Left colon (tissue), 2 donors: ENCODE measurements at regions of chr17 and their contacts with region 1.

Region 1: GRCh38 chr17:59859444-59860025 is 33.2 kb downstream of the TUBD1 start:
- DNase-seq: no peak
- ATAC-seq: peak; percentile 80

Region 2: GRCh38 chr17:59746849-59747445 is 112.6 kb before region 1 on chr17:
- intact Hi-C with region 1: loop called in 1 of 2 experiments (anchors 10 kb)
- DNase-seq: no peak
- ATAC-seq: peak; percentile 51

Region 3: GRCh38 chr17:59761705-59762512 is 97.6 kb before region 1 on chr17:
- intact Hi-C with region 1: no loop called
- DNase-seq: no peak
- ATAC-seq: no peak